Vagina (tissue), 2 donors: ENCODE measurements at regions of chr5 and their contacts with region 1.

Region 1: DNA sequence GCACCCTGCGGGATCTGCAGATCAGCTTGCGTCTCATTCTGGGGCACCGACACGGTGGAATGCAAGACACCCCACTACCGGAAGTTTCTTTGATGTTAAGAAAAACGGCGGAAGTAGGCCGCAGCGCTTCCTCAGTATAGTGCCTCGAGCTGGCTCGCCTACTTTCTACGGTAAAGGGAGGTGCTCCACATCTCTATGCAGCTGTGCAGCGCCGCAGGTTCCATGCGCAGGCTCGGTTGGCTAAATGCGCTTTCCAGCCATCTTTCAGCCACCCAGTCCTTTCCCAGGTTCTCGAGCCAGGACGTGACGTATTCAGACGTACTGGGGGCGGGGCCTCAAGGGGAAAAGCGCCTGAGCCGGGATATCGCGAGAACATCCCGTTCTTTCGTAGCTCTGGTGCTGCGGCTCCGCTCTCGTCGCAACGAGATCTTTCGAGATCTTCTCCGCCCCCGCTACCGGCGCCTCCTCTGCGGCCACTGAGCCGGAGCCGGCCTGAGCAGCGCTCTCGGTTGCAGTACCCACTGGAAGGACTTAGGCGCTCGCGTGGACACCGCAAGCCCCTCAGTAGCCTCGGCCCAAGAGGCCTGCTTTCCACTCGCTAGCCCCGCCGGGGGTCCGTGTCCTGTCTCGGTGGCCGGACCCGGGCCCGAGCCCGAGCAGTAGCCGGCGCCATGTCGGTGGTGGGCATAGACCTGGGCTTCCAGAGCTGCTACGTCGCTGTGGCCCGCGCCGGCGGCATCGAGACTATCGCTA is at the start of gene HSPA4:
- DNase-seq: peak in 1 of 2 donors; percentile 97
- H3K4me3 ChIP-seq: peak within 1 kb of the TSS; percentile 83 to 93
- H3K27ac ChIP-seq: peak within 1 kb of the TSS; percentile 100
- H3K4me1 ChIP-seq: peaks cover 35% of the 10 kb centered on the region
- H3K27me3 ChIP-seq: no peaks in the 10 kb centered on the region
- CTCF ChIP-seq: no peak
- POLR2A ChIP-seq: peak; percentile 37 to 88
- total RNA-seq, gene HSPA4: 37.6 TPM

Region 2: DNA sequence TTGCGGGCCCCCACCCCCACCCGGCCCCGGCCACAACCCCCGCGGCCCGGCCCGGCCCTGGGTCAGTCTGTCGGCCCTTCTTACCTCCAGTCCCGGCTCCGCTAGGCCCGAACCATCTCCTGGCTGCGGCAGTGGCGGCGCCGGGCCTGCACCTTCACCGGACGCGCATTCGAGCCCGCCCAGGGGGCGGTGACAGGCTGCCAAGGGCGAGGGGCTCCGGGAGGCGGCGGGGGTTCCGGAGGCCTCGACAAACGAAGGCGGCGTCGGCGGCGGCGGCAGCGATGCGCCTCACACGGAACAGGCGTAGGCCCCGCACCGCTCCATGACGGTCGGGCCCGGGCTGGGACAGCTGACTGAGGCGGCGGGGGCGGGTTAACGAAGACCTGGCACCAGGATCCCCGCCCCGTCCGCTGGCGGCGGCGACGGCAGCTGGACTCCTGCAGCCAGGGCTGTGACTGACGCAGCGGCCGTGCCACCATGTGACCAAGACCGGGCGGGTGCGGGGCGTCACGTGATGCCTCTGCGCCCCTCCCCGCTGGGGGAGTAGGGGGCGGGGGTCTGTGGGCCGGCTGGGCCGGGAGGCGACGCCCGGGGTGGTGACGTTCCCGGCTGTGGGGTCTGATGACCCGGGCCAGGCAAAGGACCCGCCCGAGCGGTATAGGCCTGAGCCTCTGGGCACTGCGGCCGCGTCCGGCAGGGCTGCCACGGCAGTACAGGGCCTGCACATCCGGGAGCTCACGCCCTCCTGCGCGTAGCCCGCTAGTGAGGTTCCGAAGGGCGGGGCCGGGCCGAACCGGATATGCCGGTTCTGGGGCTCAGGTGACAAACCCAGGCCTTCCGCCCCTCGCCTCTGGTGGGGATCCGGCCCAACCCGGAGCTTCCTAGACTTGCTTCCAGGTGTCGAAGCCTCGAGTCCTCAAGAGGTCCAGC is 88.3 kb before region 1 on chr5 and contains the start of gene AFF4:
- intact Hi-C with region 1: loop called (anchors 5 kb)
- DNase-seq: peak in 1 of 2 donors; percentile 97
- H3K4me3 ChIP-seq: peak within 1 kb of the TSS; percentile 58 to 78
- H3K27ac ChIP-seq: peak within 1 kb of the TSS; percentile 99
- H3K4me1 ChIP-seq: peaks cover 43% of the 10 kb centered on the region
- H3K27me3 ChIP-seq: no peaks in the 10 kb centered on the region
- CTCF ChIP-seq: no peak
- POLR2A ChIP-seq: peak; percentile 52 to 97
- total RNA-seq, gene AFF4: 79.1 TPM

Region 3: GRCh38 chr5:133063965-133064364 is 12.2 kb after region 1 on chr5:
- intact Hi-C with region 1: no loop called
- DNase-seq: no peak
- H3K4me3 ChIP-seq: no peak overlapping the region
- H3K27ac ChIP-seq: no peak overlapping the region
- H3K4me1 ChIP-seq: peaks cover 41% of the 10 kb centered on the region
- H3K27me3 ChIP-seq: no peaks in the 10 kb centered on the region
- CTCF ChIP-seq: no peak
- POLR2A ChIP-seq: no peak

Region 4: DNA sequence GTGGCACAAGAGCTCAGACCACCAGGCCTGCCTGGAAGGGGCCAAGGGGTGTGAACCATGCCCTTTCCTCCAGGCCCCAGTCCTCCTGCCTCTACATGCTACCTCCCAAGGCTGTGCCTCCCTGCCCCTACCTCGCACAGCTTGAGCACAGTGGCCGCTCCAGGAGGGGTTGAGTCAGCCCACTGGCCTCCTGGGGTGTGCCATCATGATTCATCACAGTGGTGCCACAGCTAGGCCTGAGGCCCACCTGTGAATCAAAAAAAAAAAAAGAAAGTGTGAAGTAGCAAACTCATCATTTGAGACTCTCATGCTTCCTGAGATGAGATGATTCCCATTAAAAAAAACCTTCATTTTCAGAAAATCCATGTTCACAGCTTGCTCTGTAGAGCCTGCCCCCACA is 240.5 kb after region 1 on chr5:
- intact Hi-C with region 1: no loop called
- DNase-seq: no peak
- H3K4me3 ChIP-seq: no peak overlapping the region
- H3K27ac ChIP-seq: no peak overlapping the region
- H3K4me1 ChIP-seq: no peaks in the 10 kb centered on the region
- H3K27me3 ChIP-seq: no peaks in the 10 kb centered on the region
- CTCF ChIP-seq: no peak
- POLR2A ChIP-seq: no peak